Activated B cell treated with CpG ODN at 0.5 μM for 24 hours (primary cell): ENCODE measurements at regions of chr17 and their contacts with region 1.

Region 1: DNA sequence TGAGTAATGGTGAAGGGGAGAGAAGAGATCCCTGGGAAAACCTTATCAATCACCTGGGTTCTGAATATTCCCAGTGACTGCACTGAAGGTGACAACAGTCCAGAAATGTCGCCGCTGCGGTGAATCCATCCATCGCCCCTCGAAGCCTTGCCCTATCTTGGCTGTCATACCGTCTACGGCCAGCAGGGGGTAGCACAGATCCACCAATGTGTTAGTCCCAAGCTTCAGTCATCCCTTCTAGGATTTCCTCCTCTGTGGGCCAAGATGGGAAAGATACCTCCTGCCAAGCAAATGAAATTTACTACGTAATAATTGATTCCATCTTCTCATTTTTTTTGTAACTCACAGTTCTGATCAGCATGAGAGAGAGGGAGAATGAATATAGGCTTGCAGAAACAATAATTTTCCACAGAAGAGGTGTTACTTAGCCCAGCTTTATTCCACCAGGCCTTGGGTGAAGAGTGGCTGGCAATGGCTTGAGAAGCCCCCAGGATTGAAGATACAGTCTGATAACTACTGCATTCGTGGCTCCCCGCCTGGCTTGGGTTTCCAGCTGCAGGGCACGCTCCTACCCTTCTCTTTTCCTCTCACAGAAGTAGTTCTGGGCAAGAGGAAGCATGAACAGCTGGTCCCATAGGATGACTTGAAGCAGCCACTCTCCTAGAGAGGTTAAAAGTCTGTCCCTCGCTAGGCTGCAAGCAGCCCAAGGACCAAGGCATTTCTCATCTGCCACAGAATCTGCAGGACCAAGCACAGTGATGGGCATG is 2.6 kb upstream of the FMNL1 start:
- DNase-seq: peak; percentile 83
- ATAC-seq: peak; percentile 29
- H3K4me3 Mint-ChIP-seq: peak overlapping the region; percentile 82
- H3K27ac Mint-ChIP-seq: peak overlapping the region; percentile 54
- H3K4me1 Mint-ChIP-seq: peaks cover 40% of the 10 kb centered on the region
- H3K27me3 Mint-ChIP-seq: no peaks in the 10 kb centered on the region
- CTCF ChIP-seq: peak; percentile 95

Region 2: GRCh38 chr17:45098869-45099616 is 120.0 kb before region 1 on chr17:
- CTCF ChIA-PET with region 1: no interaction called
- POLR2A ChIA-PET with region 1: no interaction called
- intact Hi-C with region 1: no loop called
- DNase-seq: peak; percentile 67
- ATAC-seq: peak; percentile 90
- H3K4me3 Mint-ChIP-seq: no peak overlapping the region
- H3K27ac Mint-ChIP-seq: no peak overlapping the region
- H3K4me1 Mint-ChIP-seq: peaks cover 8% of the 10 kb centered on the region
- H3K27me3 Mint-ChIP-seq: no peaks in the 10 kb centered on the region
- CTCF ChIP-seq: no peak

Region 3: GRCh38 chr17:45161019-45161825 is 57.9 kb before region 1 on chr17:
- CTCF ChIA-PET with region 1: no interaction called
- POLR2A ChIA-PET with region 1: interaction called, 23 read pairs
- intact Hi-C with region 1: no loop called
- DNase-seq: peak; percentile 98
- ATAC-seq: peak; percentile 93
- H3K4me3 Mint-ChIP-seq: peak overlapping the region; percentile 99
- H3K27ac Mint-ChIP-seq: peak overlapping the region; percentile 99
- H3K4me1 Mint-ChIP-seq: peaks cover 42% of the 10 kb centered on the region
- H3K27me3 Mint-ChIP-seq: no peaks in the 10 kb centered on the region
- CTCF ChIP-seq: no peak

Region 4: DNA sequence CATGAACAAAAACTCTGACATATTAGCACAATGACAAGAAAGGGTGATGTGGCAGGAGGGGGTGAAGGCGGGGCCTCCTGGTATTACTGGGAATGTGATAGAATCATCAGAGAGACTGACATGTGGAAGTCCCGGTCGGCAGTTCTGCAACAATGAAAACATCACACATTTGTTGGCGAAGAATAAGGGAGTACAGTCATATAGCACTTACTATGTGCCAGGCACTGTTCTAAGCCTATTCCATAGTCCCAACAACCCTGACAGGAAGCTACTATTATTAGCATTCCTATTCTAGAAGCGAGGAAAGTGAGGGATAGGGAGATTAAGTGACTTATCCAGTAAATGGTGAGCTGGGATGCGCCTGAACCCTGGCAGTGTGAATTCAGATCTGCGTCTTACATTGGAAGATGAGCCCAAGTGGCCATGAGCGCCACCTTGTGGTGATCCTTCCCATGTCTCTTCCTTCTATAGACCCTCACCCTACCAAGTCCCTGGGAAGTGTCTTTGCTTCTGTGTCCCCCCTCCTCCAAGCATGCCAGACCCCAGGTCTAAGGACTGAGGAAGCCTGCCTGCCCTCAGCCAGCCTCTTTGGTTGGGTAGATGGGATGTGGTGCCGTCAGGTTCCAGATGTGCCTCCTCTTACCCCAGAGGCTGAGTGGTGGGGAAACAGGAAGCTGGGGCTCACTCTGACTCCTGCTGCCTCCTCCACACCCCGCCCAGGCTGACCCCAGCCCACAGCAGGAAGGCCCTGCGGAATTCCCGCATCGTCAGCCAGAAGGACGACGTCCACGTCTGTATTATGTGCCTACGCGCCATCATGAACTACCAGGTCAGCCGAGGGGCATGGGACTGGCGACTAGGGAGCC is 16.6 kb after region 1 on chr17:
- CTCF ChIA-PET with region 1: interaction called, 203 read pairs
- POLR2A ChIA-PET with region 1: interaction called, 378 read pairs
- intact Hi-C with region 1: loop called (anchors 1 kb)
- DNase-seq: peak; percentile 64
- ATAC-seq: peak; percentile 67
- H3K4me3 Mint-ChIP-seq: no peak overlapping the region
- H3K27ac Mint-ChIP-seq: peak overlapping the region; percentile 15
- H3K4me1 Mint-ChIP-seq: peaks cover 50% of the 10 kb centered on the region
- H3K27me3 Mint-ChIP-seq: no peaks in the 10 kb centered on the region
- CTCF ChIP-seq: peak; percentile 70

Region 5: DNA sequence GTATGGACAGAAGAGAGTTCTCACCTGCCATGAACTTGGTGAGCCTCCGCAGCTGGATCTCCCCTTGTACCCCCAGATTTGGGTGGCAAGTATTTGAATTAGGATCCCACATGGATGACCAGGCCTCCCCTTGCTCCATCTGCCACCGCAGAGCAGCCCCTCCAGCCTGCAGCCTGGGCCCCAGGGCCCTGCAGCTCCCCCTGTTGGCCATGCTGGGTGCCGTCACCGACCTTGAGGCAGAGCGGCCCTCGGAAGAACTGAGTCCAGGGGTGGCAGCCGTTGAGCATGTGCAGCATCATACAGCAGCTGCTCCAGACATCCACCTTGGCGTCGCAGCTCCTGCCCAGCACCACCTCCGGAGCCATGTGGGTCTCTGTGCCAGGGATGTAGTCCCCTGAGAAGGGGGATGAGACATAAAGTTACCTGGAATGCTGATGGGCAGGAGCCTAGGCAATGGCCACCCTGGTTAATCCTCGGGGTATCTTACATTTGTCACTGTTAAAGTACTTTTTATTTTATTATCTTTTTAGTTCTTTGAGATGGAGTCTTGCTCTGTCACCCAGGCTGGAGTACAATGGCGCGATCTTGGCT is 51.8 kb after region 1 on chr17:
- CTCF ChIA-PET with region 1: interaction called, 60 read pairs
- POLR2A ChIA-PET with region 1: interaction called, 3 read pairs
- intact Hi-C with region 1: loop called (anchors 1 kb)
- DNase-seq: peak; percentile 44
- ATAC-seq: peak; percentile 61
- H3K4me3 Mint-ChIP-seq: no peak overlapping the region
- H3K27ac Mint-ChIP-seq: no peak overlapping the region
- H3K4me1 Mint-ChIP-seq: peaks cover 2% of the 10 kb centered on the region
- H3K27me3 Mint-ChIP-seq: no peaks in the 10 kb centered on the region
- CTCF ChIP-seq: no peak

Region 6: DNA sequence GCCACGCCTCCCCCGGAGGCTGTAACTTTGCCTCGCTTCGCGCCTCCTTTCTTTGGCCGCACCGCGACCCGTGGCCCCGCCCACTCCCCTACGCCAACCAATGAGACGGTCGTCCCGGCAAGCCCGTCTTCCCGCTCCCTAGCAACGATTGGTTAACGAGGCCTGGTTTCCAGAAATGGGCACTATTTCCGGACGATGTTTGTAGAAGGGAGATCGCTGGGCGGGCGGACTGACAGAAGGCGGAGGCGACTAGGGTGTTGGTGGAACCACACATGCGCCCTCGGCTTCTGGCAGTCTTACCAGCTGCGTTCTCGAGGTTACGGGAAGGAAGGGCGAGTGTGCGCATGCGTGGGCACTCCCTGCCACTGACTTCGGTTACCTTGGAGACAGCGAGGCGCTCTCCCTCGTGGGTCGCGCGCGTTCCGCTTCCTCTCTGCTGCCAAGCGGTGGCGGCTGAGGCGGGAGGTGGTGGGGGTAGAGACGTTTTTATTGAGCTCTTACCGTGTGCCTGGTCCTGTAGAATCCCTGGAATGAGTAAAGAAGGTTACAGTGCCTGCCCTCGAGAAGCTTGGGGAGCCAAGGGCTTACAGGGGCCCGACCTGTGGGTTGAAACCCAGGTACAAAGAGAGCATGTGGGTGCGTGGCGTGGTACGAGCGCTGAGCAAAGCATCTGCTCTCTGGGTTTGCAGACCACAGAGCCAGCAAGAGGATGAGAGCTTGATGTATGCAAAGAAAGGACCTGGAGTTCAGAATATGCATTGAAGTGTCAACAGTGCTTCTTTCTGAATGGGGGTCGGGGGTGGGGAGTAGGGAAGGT is 98.2 kb after region 1 on chr17:
- CTCF ChIA-PET with region 1: interaction called, 12 read pairs
- POLR2A ChIA-PET with region 1: interaction called, 39 read pairs
- intact Hi-C with region 1: no loop called
- DNase-seq: peak; percentile 99
- ATAC-seq: peak; percentile 79
- H3K4me3 Mint-ChIP-seq: peak overlapping the region; percentile 90
- H3K27ac Mint-ChIP-seq: peak overlapping the region; percentile 96
- H3K4me1 Mint-ChIP-seq: peaks cover 49% of the 10 kb centered on the region
- H3K27me3 Mint-ChIP-seq: no peaks in the 10 kb centered on the region
- CTCF ChIP-seq: no peak